H1 (cell line): ENCODE measurements at regions of chr13 and their contacts with region 1.

Region 1: DNA sequence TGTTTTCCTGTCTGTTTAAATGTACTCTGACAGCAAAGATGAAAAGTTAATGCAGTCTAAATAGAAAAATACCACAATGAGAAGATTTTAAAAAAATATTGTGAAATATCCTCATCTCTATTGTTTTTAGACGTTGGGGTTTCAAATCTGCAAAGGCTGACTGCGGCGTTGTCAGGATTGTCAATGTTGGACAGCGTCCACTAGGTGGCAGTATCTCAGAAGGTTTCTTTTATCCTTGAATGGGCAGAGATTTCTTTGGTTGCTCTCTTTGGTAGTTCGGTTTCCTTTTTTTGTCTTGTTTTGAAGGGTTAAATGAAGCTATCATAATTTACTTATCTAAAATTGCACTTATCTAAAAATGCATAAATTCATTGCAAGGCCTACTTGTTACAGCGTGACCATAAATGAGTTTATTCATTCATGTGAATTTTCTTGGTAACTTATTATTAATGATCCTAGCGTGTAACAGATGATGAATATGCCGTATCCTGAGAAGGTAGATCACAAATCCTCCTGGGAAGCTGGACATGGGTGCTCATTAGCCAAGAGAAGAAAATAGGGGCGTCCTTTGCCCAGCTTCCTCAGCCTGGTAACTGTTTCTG is 21.1 kb downstream of the TNFSF11 start:
- DNase-seq: no peak
- H3K4me3 ChIP-seq: no peak overlapping the region
- H3K27ac ChIP-seq: no peak overlapping the region
- H3K4me1 ChIP-seq: peaks cover 3 to 28% (median 22%) of the 10 kb centered on the region in 4 experiments
- H3K27me3 ChIP-seq: no peaks in the 10 kb centered on the region
- CTCF ChIP-seq: peak; percentile 43 to 81 (median 64)
- EP300 ChIP-seq: no peak
- POLR2A ChIP-seq: no peak
- RAD21 ChIP-seq: peak; percentile 83 to 91

Region 2: GRCh38 chr13:42607546-42607945 is 12.5 kb after region 1 on chr13:
- CTCF ChIA-PET with region 1: interaction called, 11 read pairs
- POLR2A ChIA-PET with region 1: interaction called, 6 read pairs
- DNase-seq: no peak
- H3K4me3 ChIP-seq: no peak overlapping the region
- H3K27ac ChIP-seq: no peak overlapping the region
- H3K4me1 ChIP-seq: no peaks in the 10 kb centered on the region
- H3K27me3 ChIP-seq: peaks cover 0 to 1% (median 0%) of the 10 kb centered on the region in 4 experiments; a peak in 1 of 7 replicates
- CTCF ChIP-seq: no peak
- EP300 ChIP-seq: no peak
- POLR2A ChIP-seq: no peak
- RAD21 ChIP-seq: no peak

Region 3: GRCh38 chr13:42859760-42860159 is 264.7 kb after region 1 on chr13:
- CTCF ChIA-PET with region 1: interaction called, 3 read pairs
- POLR2A ChIA-PET with region 1: interaction called, 11 read pairs
- DNase-seq: no peak
- H3K4me3 ChIP-seq: no peak overlapping the region
- H3K27ac ChIP-seq: no peak overlapping the region
- H3K4me1 ChIP-seq: peaks cover 0 to 3% (median 0%) of the 10 kb centered on the region in 4 experiments; a peak in 2 of 7 replicates
- H3K27me3 ChIP-seq: no peaks in the 10 kb centered on the region
- CTCF ChIP-seq: no peak
- EP300 ChIP-seq: no peak
- POLR2A ChIP-seq: no peak
- RAD21 ChIP-seq: no peak